ENCODE measurements at regions of chr20 and their contacts with region 1.

Region 1: GRCh38 chr20:25407311-25408169 is at the start of gene GINS1:
- DNase-seq: peak; percentile 86
- H3K4me3 ChIP-seq: peak within 1 kb of the TSS; percentile 89
- H3K27ac ChIP-seq: peak within 1 kb of the TSS; percentile 52
- H3K4me1 ChIP-seq: peaks cover 10% of the 10 kb centered on the region; the same call in 1 of the 2 replicates
- H3K27me3 ChIP-seq: no peaks in the 10 kb centered on the region
- total RNA-seq, gene GINS1: 2.9 and 7.5 TPM in 2 replicates

Region 2: DNA sequence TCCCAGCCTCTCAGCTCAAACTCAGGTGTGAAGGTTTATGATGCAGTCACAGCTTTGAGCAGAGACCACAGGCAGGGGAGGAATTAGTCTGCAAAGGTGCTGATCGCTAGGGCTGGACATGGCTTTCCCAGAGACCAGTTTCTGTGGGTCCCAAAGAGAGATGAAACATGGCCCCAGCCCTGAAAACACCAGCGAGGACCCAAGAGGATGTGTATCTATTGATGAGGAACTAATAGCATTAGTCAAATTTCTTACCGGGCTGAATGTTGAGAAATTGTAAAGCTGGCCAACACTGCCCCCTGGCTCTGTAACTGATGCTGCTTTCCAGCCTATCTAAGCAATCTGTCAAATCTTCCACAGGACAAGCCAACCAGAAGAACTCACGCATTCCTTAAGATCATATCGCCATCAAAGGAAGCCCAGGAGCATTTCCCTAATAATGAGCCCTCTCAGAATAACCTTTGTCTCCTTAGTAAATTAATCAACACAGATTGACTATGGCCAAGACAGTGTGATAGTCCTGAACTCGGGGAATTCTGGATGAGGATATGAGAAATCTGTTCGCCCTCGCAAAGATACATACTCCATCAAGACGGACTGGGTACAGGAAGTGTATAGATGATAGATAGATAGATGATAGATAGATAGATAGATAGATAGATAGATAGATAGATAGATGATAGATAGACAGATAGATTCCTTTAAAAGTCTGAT is 341.8 kb before region 1 on chr20:
- in situ Hi-C with region 1: loop called (anchors 10 kb)
- DNase-seq: peak; percentile 77
- H3K4me3 ChIP-seq: no peak overlapping the region
- H3K27ac ChIP-seq: no peak overlapping the region
- H3K4me1 ChIP-seq: no peaks in the 10 kb centered on the region
- H3K27me3 ChIP-seq: peaks cover 51% of the 10 kb centered on the region

Region 3: DNA sequence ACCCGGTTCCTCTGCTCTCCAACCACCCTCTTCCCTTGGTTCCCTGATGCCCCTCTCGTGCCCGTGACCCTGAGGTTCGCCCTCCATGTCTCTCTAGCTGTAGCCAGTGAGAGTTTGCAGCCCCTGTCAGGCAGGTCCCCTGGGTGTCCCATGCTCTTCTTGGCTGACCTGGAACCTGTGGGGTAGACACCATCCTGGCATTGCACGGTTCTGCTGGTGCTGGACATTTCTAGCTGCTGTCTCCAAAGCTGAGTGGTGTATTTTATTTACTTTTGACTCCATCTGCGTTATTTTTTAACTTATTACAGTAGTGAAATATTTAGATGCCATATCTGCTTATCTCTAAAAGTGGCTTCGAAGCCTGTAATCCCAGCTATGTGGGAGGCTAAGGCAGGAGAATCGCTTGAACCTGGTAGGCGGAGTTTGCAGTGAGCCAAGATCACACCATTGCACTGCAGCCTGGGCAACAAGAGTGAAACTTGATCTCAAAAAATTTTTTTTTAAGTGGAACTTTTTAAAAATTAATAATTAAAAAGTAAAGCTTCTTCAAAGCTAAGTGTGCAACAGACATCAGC is 199.5 kb before region 1 on chr20:
- in situ Hi-C with region 1: no loop called
- DNase-seq: no peak
- H3K4me3 ChIP-seq: no peak overlapping the region
- H3K27ac ChIP-seq: no peak overlapping the region
- H3K4me1 ChIP-seq: no peaks in the 10 kb centered on the region
- H3K27me3 ChIP-seq: no peaks in the 10 kb centered on the region

Region 4: GRCh38 chr20:25294459-25295385 is 112.8 kb before region 1 on chr20:
- in situ Hi-C with region 1: loop called (anchors 5 kb)
- DNase-seq: peak; percentile 63
- H3K4me3 ChIP-seq: no peak overlapping the region
- H3K27ac ChIP-seq: no peak overlapping the region
- H3K4me1 ChIP-seq: no peaks in the 10 kb centered on the region
- H3K27me3 ChIP-seq: no peaks in the 10 kb centered on the region

Region 5: GRCh38 chr20:25696384-25697131 is 289.0 kb after region 1 on chr20 and contains the start of gene ZNF337:
- in situ Hi-C with region 1: loop called (anchors 25 kb)
- DNase-seq: peak; percentile 98
- H3K4me3 ChIP-seq: peak within 1 kb of the TSS; percentile 94
- H3K27ac ChIP-seq: peak within 1 kb of the TSS; percentile 66
- H3K4me1 ChIP-seq: peaks cover 5% of the 10 kb centered on the region; the same call in 1 of the 2 replicates
- H3K27me3 ChIP-seq: no peaks in the 10 kb centered on the region
- total RNA-seq, gene ZNF337: 6.4 and 9.1 TPM in 2 replicates

Region 6: GRCh38 chr20:25865380-25866118 is 458.0 kb after region 1 on chr20:
- in situ Hi-C with region 1: loop called (anchors 25 kb)
- DNase-seq: peak; percentile 85
- H3K4me3 ChIP-seq: peak overlapping the region; percentile 80
- H3K27ac ChIP-seq: no peak overlapping the region
- H3K4me1 ChIP-seq: no peaks in the 10 kb centered on the region
- H3K27me3 ChIP-seq: peaks cover 3% of the 10 kb centered on the region; the same call in 1 of the 2 replicates